ENCODE measurements at regions of chr6 and their contacts with region 1.

Region 1: GRCh38 chr6:152982768-152983636 is at the start of gene FBXO5:
- DNase-seq: peak; percentile 98
- ATAC-seq: peak; percentile 89
- H3K4me3 Mint-ChIP-seq: peak within 1 kb of the TSS; percentile 90
- H3K27ac Mint-ChIP-seq: peak within 1 kb of the TSS; percentile 100
- H3K4me1 Mint-ChIP-seq: peaks cover 34% of the 10 kb centered on the region
- H3K27me3 Mint-ChIP-seq: no peaks in the 10 kb centered on the region
- total RNA-seq, gene FBXO5: 48.7 to 57.3 TPM

Region 2: GRCh38 chr6:152301764-152302568 is 681.0 kb before region 1 on chr6:
- CTCF ChIA-PET with region 1: interaction called, 3 read pairs
- POLR2A ChIA-PET with region 1: no interaction called
- intact Hi-C with region 1: loop called (anchors 5 kb)
- DNase-seq: peak; percentile 95
- ATAC-seq: peak; percentile 92
- H3K4me3 Mint-ChIP-seq: peak overlapping the region; percentile 92
- H3K27ac Mint-ChIP-seq: peak overlapping the region; percentile 99
- H3K4me1 Mint-ChIP-seq: peaks cover 31% of the 10 kb centered on the region
- H3K27me3 Mint-ChIP-seq: no peaks in the 10 kb centered on the region

Region 3: GRCh38 chr6:153002607-153003365 is 19.8 kb after region 1 on chr6 and contains the start of gene MTRF1L:
- CTCF ChIA-PET with region 1: interaction called, 4 read pairs
- POLR2A ChIA-PET with region 1: interaction called, 10 read pairs
- intact Hi-C with region 1: loop called (anchors 1 to 2 kb)
- DNase-seq: peak; percentile 95
- ATAC-seq: peak; percentile 87
- H3K4me3 Mint-ChIP-seq: peak within 1 kb of the TSS; percentile 92
- H3K27ac Mint-ChIP-seq: peak within 1 kb of the TSS; percentile 99
- H3K4me1 Mint-ChIP-seq: peaks cover 36% of the 10 kb centered on the region
- H3K27me3 Mint-ChIP-seq: no peaks in the 10 kb centered on the region
- total RNA-seq, gene MTRF1L: 16.8 to 19.9 TPM

Region 4: GRCh38 chr6:154569156-154569862 is 1586.3 kb after region 1 on chr6:
- CTCF ChIA-PET with region 1: no interaction called
- POLR2A ChIA-PET with region 1: no interaction called
- intact Hi-C with region 1: no loop called
- DNase-seq: no peak
- ATAC-seq: no peak
- H3K4me3 Mint-ChIP-seq: no peak overlapping the region
- H3K27ac Mint-ChIP-seq: no peak overlapping the region
- H3K4me1 Mint-ChIP-seq: no peaks in the 10 kb centered on the region
- H3K27me3 Mint-ChIP-seq: peaks cover 2% of the 10 kb centered on the region

Region 5: GRCh38 chr6:154606457-154606856 is 1623.5 kb after region 1 on chr6:
- CTCF ChIA-PET with region 1: no interaction called
- POLR2A ChIA-PET with region 1: no interaction called
- intact Hi-C with region 1: loop called in 1 of 2 experiments (anchors 5 kb)
- DNase-seq: peak; percentile 96
- ATAC-seq: peak; percentile 92
- H3K4me3 Mint-ChIP-seq: peak overlapping the region; percentile 13
- H3K27ac Mint-ChIP-seq: peak overlapping the region; percentile 84
- H3K4me1 Mint-ChIP-seq: peaks cover 45% of the 10 kb centered on the region
- H3K27me3 Mint-ChIP-seq: peaks cover 4% of the 10 kb centered on the region